ENCODE measurements at regions of chr10 and their contacts with region 1.

Region 1: DNA sequence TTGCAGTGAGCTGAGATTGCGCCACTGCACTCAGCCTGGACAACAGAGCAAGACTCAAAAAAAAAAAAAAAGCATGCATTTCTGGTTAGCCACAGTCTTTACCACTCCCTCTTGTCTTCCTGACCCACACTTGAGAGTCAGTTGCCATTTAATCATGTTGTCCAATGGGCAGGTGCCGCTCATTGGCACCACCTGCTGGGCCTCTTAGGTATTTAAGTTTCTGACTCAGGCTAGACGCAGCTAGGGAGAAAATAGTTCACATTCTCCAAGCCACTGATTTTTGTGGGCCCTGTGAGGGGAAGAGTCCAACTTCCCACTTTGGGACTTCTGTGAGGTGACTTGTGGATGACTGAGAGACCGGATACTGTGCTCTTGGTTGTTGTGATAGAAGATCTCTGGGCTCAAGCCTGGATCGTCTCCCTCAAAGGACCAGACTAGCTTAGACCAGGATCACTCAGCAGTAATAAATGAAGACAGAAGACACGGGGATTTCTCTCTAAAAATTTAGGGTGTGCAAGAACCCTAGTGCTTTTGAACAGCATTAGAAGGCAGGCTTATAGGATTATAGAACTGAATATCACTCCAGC is 26.8 kb upstream of the SORCS3 start:
- DNase-seq: peak in 5 of 9 donors; percentile 5 to 27 (median 14)
- ATAC-seq: peak; percentile 34
- H3K4me3 ChIP-seq: no peak overlapping the region
- H3K4me3 Mint-ChIP-seq: no peak overlapping the region
- H3K27ac ChIP-seq: no peak overlapping the region
- H3K27ac Mint-ChIP-seq: no peak overlapping the region
- H3K4me1 ChIP-seq: no peaks in the 10 kb centered on the region
- H3K4me1 Mint-ChIP-seq: no peaks in the 10 kb centered on the region
- H3K27me3 ChIP-seq: no peaks in the 10 kb centered on the region
- H3K27me3 Mint-ChIP-seq: peaks cover 0 to 19% (median 5%) of the 10 kb centered on the region in 5 donors

Region 2: DNA sequence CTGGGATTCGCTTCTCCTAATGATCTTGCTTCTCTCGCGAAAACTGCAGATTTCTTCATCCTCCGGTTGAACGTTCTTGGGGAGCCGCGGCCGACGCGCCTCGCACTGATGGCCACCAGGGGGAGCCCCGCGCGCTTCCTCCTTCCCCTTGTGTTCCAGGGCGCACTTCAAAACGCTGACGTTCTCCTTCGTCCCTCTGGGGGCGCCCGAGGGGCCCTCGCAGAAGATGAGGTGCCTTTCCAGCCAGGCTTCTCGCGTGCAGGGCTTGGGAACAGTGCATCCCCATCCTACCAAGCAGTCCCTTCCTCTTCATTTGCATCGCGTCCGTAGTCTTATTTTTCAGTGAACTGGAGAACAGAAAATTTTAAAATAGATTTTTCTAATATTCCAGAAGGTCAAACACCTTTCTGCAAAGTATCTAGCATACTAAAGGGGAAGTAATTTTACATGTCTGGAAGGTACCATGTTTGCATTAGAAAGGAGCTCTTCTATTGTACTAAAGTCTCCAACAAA is 322.8 kb before region 1 on chr10:
- CTCF ChIA-PET with region 1: no interaction called
- POLR2A ChIA-PET with region 1: no interaction called
- intact Hi-C with region 1: loop called (anchors 2 to 10 kb)
- DNase-seq: peak; percentile 77 to 89 (median 86)
- ATAC-seq: peak; percentile 100
- H3K4me3 ChIP-seq: no peak overlapping the region
- H3K4me3 Mint-ChIP-seq: peak overlapping the region in 4 of 10 donors; percentile 0 to 64 (median 26)
- H3K27ac ChIP-seq: no peak overlapping the region
- H3K27ac Mint-ChIP-seq: peak overlapping the region in 5 of 9 donors; percentile 1 to 81 (median 20)
- H3K4me1 ChIP-seq: peaks cover 0 to 9% of the 10 kb centered on the region in 2 donors
- H3K4me1 Mint-ChIP-seq: peaks cover 2 to 11% (median 6%) of the 10 kb centered on the region in 7 donors
- H3K27me3 ChIP-seq: peaks cover 0 to 5% of the 10 kb centered on the region in 2 donors
- H3K27me3 Mint-ChIP-seq: peaks cover 3 to 45% (median 10%) of the 10 kb centered on the region in 5 donors